ENCODE measurements at regions of chr7 and their contacts with region 1.

Region 1: GRCh38 chr7:69994886-69995542 is 396.7 kb downstream of the AUTS2 start:
- DNase-seq: no peak
- ATAC-seq: no peak
- H3K4me3 ChIP-seq: no peak overlapping the region
- H3K27ac ChIP-seq: no peak overlapping the region
- H3K4me1 ChIP-seq: no peaks in the 10 kb centered on the region
- H3K27me3 ChIP-seq: no peaks in the 10 kb centered on the region
- CTCF ChIP-seq: no peak
- POLR2A ChIP-seq: no peak
- RAD21 ChIP-seq: no peak

Region 2: GRCh38 chr7:69908454-69908853 is 86.6 kb before region 1 on chr7:
- CTCF ChIA-PET with region 1: no interaction called
- POLR2A ChIA-PET with region 1: no interaction called
- dilution Hi-C with region 1: no loop called
- in situ Hi-C with region 1: no loop called
- intact Hi-C with region 1: no loop called
- DNase-seq: no peak
- ATAC-seq: no peak
- H3K4me3 ChIP-seq: no peak overlapping the region
- H3K27ac ChIP-seq: no peak overlapping the region
- H3K4me1 ChIP-seq: no peaks in the 10 kb centered on the region
- H3K27me3 ChIP-seq: no peaks in the 10 kb centered on the region
- CTCF ChIP-seq: no peak
- POLR2A ChIP-seq: no peak
- RAD21 ChIP-seq: no peak

Region 3: GRCh38 chr7:70027867-70028266 is 32.9 kb after region 1 on chr7:
- CTCF ChIA-PET with region 1: no interaction called
- POLR2A ChIA-PET with region 1: interaction called, 14 read pairs
- dilution Hi-C with region 1: no loop called
- in situ Hi-C with region 1: no loop called
- intact Hi-C with region 1: no loop called
- DNase-seq: no peak
- ATAC-seq: no peak
- H3K4me3 ChIP-seq: no peak overlapping the region
- H3K27ac ChIP-seq: no peak overlapping the region
- H3K4me1 ChIP-seq: no peaks in the 10 kb centered on the region
- H3K27me3 ChIP-seq: no peaks in the 10 kb centered on the region
- CTCF ChIP-seq: no peak
- POLR2A ChIP-seq: no peak
- RAD21 ChIP-seq: no peak

Region 4: GRCh38 chr7:70285187-70285586 is 290.2 kb after region 1 on chr7:
- CTCF ChIA-PET with region 1: no interaction called
- POLR2A ChIA-PET with region 1: no interaction called
- dilution Hi-C with region 1: no loop called
- in situ Hi-C with region 1: no loop called
- intact Hi-C with region 1: no loop called
- DNase-seq: no peak
- ATAC-seq: no peak
- H3K4me3 ChIP-seq: no peak overlapping the region
- H3K27ac ChIP-seq: no peak overlapping the region
- H3K4me1 ChIP-seq: no peaks in the 10 kb centered on the region
- H3K27me3 ChIP-seq: no peaks in the 10 kb centered on the region
- CTCF ChIP-seq: no peak
- POLR2A ChIP-seq: no peak
- RAD21 ChIP-seq: no peak

Measured in IMR-90 (cell line).